ENCODE measurements at regions of chr5 and their contacts with region 1.

Region 1: GRCh38 chr5:134041570-134042411 is 37.0 kb upstream of the VDAC1 start:
- DNase-seq: no peak
- H3K4me3 ChIP-seq: no peak overlapping the region
- H3K4me3 Mint-ChIP-seq: no peak overlapping the region
- H3K27ac Mint-ChIP-seq: no peak overlapping the region
- H3K4me1 ChIP-seq: no peaks in the 10 kb centered on the region
- H3K4me1 Mint-ChIP-seq: peaks cover 17% of the 10 kb centered on the region
- H3K27me3 ChIP-seq: no peaks in the 10 kb centered on the region
- H3K27me3 Mint-ChIP-seq: no peaks in the 10 kb centered on the region
- CTCF ChIP-seq: no peak

Region 2: GRCh38 chr5:133952729-133953567 is 88.8 kb before region 1 on chr5:
- CTCF ChIA-PET with region 1: no interaction called
- POLR2A ChIA-PET with region 1: no interaction called
- intact Hi-C with region 1: no loop called
- DNase-seq: no peak
- H3K4me3 ChIP-seq: no peak overlapping the region
- H3K4me3 Mint-ChIP-seq: no peak overlapping the region
- H3K27ac Mint-ChIP-seq: no peak overlapping the region
- H3K4me1 ChIP-seq: no peaks in the 10 kb centered on the region
- H3K4me1 Mint-ChIP-seq: no peaks in the 10 kb centered on the region
- H3K27me3 ChIP-seq: no peaks in the 10 kb centered on the region
- H3K27me3 Mint-ChIP-seq: no peaks in the 10 kb centered on the region
- CTCF ChIP-seq: no peak

Region 3: GRCh38 chr5:134018154-134018985 is 23.4 kb before region 1 on chr5:
- CTCF ChIA-PET with region 1: interaction called, 14 read pairs
- POLR2A ChIA-PET with region 1: interaction called, 3 read pairs
- intact Hi-C with region 1: no loop called
- DNase-seq: peak; percentile 76 to 89
- H3K4me3 ChIP-seq: no peak overlapping the region
- H3K4me3 Mint-ChIP-seq: peak overlapping the region; percentile 32
- H3K27ac Mint-ChIP-seq: peak overlapping the region; percentile 94
- H3K4me1 ChIP-seq: peaks cover 38% of the 10 kb centered on the region
- H3K4me1 Mint-ChIP-seq: peaks cover 35% of the 10 kb centered on the region
- H3K27me3 ChIP-seq: no peaks in the 10 kb centered on the region
- H3K27me3 Mint-ChIP-seq: no peaks in the 10 kb centered on the region
- CTCF ChIP-seq: no peak

Region 4: DNA sequence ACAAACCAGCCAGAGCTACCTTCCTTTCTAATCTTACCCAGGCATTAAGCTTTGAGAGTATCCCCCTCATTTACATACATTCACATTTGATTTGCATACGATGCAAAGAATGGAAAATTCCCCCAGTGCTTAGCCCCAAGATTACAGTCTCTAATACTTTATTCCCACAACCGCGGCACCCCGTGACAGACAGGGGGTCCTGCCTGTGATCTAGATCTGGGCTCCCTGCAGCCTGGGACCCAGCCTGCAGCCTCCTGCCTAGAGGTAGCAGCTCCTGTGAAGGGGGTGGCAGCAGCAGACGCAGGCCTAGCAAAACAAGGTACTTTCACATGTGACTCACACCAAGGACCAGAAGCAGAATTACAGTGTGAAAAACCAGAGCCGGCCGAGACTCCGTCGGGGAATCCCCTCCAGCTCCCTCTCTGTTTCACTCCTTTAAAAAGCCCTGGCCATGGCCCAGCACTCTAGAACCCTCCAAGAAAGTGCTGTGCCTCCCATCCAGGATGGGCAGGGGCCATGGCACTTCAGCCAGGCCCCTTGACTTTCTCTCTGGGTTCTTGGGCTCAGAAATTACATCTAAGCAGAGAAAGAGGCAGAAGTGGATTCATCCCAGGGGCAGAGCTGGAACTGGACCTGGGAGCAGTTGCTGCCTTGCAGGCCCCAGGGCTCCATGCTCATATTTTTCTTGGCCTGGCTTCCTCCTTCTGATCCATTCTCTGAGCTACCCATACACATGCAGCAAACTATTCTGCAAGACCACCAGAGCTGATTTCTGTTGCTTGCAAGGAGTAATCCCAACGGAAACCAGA is 58.7 kb after region 1 on chr5:
- CTCF ChIA-PET with region 1: interaction called, 18 read pairs
- POLR2A ChIA-PET with region 1: no interaction called
- intact Hi-C with region 1: no loop called
- DNase-seq: no peak
- H3K4me3 ChIP-seq: no peak overlapping the region
- H3K4me3 Mint-ChIP-seq: no peak overlapping the region
- H3K27ac Mint-ChIP-seq: no peak overlapping the region
- H3K4me1 ChIP-seq: peaks cover 22% of the 10 kb centered on the region
- H3K4me1 Mint-ChIP-seq: peaks cover 7% of the 10 kb centered on the region
- H3K27me3 ChIP-seq: no peaks in the 10 kb centered on the region
- H3K27me3 Mint-ChIP-seq: no peaks in the 10 kb centered on the region
- CTCF ChIP-seq: no peak

Region 5: DNA sequence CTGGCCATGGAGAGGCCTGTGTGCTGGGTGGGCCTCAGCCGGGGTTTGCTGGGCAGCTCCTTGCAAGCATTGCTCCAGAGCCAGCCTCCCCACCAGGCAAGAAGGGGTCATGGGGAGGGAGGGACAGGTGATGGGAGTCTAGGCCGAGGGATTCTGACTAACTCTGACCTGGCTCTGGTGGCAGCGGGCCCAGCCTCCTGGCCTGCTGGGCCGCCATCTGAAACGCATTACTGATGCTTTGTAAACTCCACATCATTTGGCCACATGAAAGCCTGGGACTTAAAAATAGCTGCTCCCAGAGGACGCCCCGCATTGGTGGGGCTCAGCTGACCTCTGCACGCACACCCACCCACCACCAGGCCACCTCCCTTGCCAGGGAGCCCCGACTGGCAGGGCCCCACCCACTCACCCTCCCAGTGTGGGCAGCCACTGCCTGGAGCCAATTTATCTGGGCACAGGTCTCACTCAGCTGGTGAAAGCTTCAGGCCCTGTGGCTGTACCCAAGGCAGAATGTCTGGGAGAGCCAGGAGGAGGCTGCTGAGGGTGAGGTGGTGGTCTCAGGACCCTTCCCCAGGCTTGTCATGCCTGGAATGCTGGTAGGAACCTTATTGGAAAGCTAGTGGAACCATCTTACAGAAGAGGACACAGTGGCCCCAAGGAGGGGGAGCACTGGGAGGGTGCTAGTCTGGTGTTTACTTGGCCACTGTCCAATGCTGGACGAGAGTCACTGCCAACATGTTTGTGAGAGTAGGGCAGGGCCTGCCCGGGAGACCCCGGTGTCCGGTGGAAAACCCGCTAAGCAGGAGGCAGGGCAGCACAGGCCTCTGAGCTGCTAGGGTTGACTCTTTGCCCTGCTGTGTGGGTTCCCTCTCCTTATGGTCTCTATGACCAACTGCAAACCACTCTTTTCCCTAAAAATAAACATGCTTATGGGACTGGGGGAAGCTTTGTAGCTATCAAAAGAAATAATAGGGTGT is 83.5 kb after region 1 on chr5:
- CTCF ChIA-PET with region 1: interaction called, 10 read pairs
- POLR2A ChIA-PET with region 1: no interaction called
- intact Hi-C with region 1: no loop called
- DNase-seq: no peak
- H3K4me3 ChIP-seq: no peak overlapping the region
- H3K4me3 Mint-ChIP-seq: no peak overlapping the region
- H3K27ac Mint-ChIP-seq: no peak overlapping the region
- H3K4me1 ChIP-seq: no peaks in the 10 kb centered on the region
- H3K4me1 Mint-ChIP-seq: no peaks in the 10 kb centered on the region
- H3K27me3 ChIP-seq: no peaks in the 10 kb centered on the region
- H3K27me3 Mint-ChIP-seq: no peaks in the 10 kb centered on the region
- CTCF ChIP-seq: no peak

Region 6: DNA sequence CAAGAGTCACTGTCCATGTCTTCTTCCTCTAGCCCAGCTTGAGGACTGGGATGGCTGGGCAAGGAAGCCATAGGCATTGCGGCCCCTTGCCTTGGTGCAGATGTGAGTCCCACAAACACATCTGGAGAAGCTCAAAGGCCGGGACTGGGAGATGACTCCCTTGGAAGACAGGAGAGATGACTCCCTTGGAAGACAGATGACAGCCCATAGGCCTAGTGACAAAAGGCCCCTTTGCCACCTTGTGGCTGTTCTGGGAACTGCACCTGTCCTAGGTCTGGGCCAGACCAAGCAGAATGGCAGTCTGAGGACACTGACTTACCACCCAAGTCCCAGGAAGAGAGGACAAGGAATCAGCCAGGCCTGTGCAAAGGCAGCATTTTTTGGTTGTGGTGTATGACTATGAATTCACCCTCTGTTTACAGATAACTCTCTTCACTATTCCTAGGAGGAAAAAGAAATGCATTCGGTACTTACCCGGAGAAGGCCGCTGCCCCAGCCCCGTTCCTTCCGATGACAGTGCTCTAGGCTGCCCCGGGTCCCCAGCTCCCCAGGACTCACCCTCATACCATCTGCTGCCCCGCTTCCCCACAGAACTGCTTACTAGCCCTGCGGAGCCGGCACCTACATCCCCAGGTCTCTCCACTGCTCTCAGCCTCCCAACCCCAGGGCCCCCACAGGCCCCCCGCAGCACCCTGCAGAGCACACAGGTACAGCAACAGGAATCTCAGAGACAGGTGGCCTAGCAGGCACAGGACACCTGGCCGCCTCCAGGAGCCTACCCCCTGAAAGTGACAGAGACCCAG is 104.2 kb after region 1 on chr5:
- CTCF ChIA-PET with region 1: interaction called, 67 read pairs
- POLR2A ChIA-PET with region 1: no interaction called
- intact Hi-C with region 1: loop called (anchors 1 kb)
- DNase-seq: peak; percentile 79 to 88
- H3K4me3 ChIP-seq: no peak overlapping the region
- H3K4me3 Mint-ChIP-seq: no peak overlapping the region
- H3K27ac Mint-ChIP-seq: no peak overlapping the region
- H3K4me1 ChIP-seq: peaks cover 25% of the 10 kb centered on the region
- H3K4me1 Mint-ChIP-seq: peaks cover 19% of the 10 kb centered on the region
- H3K27me3 ChIP-seq: no peaks in the 10 kb centered on the region
- H3K27me3 Mint-ChIP-seq: no peaks in the 10 kb centered on the region
- CTCF ChIP-seq: peak; percentile 96 to 97